Mammary epithelial cell (primary cell): ENCODE measurements at regions of chr2 and their contacts with region 1.

Region 1: DNA sequence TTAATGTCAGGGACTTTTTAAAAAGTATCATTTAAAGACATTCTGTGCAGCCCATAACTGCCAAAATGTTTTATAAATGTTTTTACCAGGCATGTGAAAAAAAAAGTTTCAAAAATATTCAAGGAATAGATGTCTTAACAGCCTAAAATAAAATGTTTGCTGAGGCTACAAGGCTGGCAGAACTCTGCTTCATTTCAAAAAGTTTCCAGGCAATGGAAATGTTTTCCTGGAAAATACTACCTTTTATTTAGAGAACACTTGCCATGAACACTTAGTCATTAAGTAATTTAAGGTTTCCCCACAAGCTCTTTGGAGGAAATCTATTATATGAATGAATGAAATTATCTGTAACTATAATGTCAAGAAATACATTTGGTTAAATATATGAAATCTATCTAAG is 68.8 kb downstream of the THADA start:
- DNase-seq: no peak
- H3K4me3 ChIP-seq: no peak overlapping the region
- H3K27ac ChIP-seq: no peak overlapping the region
- H3K4me1 ChIP-seq: no peaks in the 10 kb centered on the region
- H3K27me3 ChIP-seq: no peaks in the 10 kb centered on the region
- CTCF ChIP-seq: no peak

Region 2: DNA sequence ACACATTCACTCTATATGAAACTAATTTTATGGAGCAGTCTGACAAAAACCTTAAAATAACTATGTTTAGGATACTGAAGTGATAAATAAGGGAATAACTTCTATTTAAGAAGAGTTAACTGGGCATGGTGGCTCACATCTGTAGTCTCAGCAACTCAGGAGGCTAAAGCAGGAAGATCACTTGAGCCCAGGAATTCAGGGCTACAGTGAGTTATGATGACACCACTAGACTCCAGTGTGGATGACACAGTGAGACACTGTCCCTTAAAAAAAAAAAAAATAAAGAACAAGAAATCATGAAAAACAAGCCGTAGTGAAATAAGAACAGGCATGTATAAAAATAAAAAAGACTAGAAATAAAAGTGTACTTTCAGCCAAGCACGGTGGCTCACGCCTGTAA is 13.2 kb before region 1 on chr2:
- CTCF ChIA-PET with region 1: interaction called, 12 read pairs
- dilution Hi-C with region 1: no loop called
- in situ Hi-C with region 1: no loop called
- intact Hi-C with region 1: no loop called
- DNase-seq: no peak
- H3K4me3 ChIP-seq: no peak overlapping the region
- H3K27ac ChIP-seq: no peak overlapping the region
- H3K4me1 ChIP-seq: peaks cover 16% of the 10 kb centered on the region
- H3K27me3 ChIP-seq: no peaks in the 10 kb centered on the region
- CTCF ChIP-seq: no peak

Region 3: DNA sequence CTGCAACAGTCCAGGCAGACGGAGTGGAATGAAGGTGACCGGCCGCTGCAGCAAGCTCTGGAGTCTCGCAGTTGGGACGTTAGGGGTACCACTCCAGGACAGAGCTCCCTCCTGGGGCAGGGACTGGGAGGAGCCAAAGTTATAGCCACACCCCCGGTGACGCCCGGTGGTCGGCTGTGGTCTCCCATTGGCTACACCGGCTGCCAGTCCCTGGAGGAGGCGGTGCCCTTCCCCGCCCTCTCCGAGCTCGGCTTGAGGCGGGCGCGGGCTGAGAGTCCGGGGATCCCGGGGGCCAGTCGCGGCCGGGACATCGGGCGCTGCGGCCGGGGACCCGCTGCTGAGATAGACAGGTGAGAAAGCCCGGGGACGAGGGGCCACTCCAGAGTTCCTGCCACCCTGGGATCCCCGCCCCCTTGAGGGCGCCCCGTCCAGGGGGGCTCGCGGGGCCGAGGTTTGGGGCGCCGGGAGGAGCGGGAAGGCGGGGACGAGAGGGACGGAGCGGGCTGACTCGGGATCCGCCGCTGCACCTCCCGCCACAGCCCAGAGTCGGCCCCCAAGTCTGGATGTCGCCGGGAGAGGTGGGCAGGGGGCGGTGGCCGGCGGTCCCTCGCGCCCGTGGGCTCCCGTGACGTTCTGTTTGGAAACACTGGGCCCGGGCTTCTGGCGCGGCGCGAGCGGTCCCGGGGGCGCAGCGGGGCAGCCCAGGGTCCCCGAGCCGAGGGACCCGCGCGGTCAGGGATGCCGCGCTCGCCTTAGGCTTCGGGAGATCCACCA is 110.2 kb after region 1 on chr2 and contains the start of gene PLEKHH2:
- CTCF ChIA-PET with region 1: no interaction called
- dilution Hi-C with region 1: no loop called
- in situ Hi-C with region 1: no loop called
- intact Hi-C with region 1: no loop called
- DNase-seq: peak; percentile 79
- H3K4me3 ChIP-seq: peak within 1 kb of the TSS; percentile 71 to 85 (median 76)
- H3K27ac ChIP-seq: no peak within 1 kb of the TSS
- H3K4me1 ChIP-seq: peaks cover 20% of the 10 kb centered on the region
- H3K27me3 ChIP-seq: no peaks in the 10 kb centered on the region
- CTCF ChIP-seq: peak in 1 of 2 donors; percentile 3
- total RNA-seq, gene PLEKHH2: 1.3 to 2.7 TPM

Region 4: DNA sequence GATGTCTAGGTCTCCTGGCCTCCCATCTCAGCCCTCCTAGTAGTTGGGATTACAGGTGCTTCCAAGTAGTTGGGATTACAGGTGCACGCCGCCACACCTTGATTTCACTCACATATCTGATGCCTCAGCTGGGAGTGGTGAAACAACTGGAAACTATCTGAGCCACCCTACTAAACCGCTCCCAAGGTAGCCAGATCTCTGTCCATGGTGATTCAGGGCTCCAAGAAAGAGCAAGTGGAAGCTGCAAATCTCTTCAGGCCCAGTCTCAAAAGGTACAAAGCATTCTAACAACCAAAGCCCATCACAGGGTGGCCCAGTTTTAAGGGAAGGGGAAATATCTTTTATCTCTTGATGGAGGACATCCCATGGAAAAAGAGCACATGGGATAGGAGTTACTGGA is 130.2 kb after region 1 on chr2:
- CTCF ChIA-PET with region 1: no interaction called
- dilution Hi-C with region 1: no loop called
- in situ Hi-C with region 1: no loop called
- intact Hi-C with region 1: no loop called
- DNase-seq: peak; percentile 6
- H3K4me3 ChIP-seq: no peak overlapping the region
- H3K27ac ChIP-seq: no peak overlapping the region
- H3K4me1 ChIP-seq: no peaks in the 10 kb centered on the region
- H3K27me3 ChIP-seq: no peaks in the 10 kb centered on the region
- CTCF ChIP-seq: no peak